A549 (cell line): ENCODE measurements at regions of chr3 and their contacts with region 1.

Region 1: DNA sequence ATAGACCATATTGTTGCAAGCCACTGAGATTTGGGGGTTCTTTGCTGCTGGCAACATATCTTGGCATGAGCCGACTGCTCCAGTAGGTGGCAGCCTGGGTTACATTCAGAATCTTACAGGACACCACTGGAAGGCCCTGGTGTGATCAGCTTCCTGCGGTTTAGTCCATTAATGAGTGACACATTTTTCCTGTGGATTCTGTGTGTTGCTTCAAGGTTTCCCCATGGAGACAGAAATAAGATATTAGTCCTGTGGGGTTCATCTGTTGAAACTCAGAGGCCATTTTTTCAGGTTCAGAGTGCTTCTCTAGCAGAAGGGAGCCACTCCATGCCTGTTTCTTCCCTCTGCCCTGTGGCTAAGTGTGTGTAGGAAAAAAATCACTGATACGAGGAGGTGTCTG is 116.2 kb downstream of the MFSD1 start:
- DNase-seq: peak; percentile 15 to 53
- ATAC-seq: peak; percentile 86 to 95
- H3K4me3 ChIP-seq: no peak overlapping the region
- H3K27ac ChIP-seq: no peak overlapping the region
- H3K4me1 ChIP-seq: no peaks in the 10 kb centered on the region
- CTCF ChIP-seq: peak; percentile 53
- EP300 ChIP-seq: no peak
- POLR2A ChIP-seq: no peak
- RAD21 ChIP-seq: peak; percentile 65 to 71

Region 2: DNA sequence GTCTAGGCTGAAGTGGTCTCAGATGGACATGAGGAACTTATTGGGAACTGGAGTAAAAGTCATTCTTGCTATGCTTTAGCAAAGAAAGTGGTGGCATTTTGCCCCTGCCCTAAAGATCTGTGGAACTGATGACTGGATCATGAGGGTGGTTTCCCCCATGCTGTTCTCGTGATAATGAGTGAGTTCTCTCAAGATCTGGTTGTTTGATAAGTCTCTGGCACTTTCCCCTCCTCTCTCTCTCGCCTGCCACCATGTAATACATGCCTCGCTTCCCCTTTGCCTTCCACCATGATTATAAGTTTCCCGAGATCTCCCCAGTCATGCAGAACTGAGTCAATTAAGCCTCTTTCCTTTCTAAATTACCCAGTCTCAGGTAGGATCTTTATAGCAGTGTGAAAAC is 358.5 kb before region 1 on chr3:
- CTCF ChIA-PET with region 1: no interaction called
- POLR2A ChIA-PET with region 1: no interaction called
- DNase-seq: no peak
- ATAC-seq: no peak
- H3K4me3 ChIP-seq: no peak overlapping the region
- H3K27ac ChIP-seq: no peak overlapping the region
- H3K4me1 ChIP-seq: no peaks in the 10 kb centered on the region
- CTCF ChIP-seq: no peak
- EP300 ChIP-seq: no peak
- POLR2A ChIP-seq: no peak
- RAD21 ChIP-seq: no peak

Region 3: DNA sequence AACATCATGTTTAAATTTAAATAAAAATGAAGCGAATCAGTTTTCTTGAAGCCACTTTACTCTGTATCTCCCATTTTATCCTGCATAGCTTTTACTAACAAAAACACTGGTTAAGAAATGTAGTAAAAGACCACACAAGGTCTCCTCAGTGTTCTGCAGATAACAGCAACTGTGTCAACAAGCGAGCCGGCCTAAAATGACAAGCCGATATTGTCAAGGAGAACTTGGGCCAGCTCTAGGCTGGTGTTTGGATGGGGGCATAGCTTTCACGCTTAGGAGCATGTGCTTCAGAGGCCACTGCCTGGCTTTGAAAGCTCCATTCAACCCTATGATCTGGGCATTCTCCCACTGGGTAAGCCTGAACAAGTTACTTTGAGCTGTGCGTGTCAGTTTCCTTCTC is 78.0 kb before region 1 on chr3:
- CTCF ChIA-PET with region 1: no interaction called
- POLR2A ChIA-PET with region 1: no interaction called
- DNase-seq: no peak
- ATAC-seq: no peak
- H3K4me3 ChIP-seq: no peak overlapping the region
- H3K27ac ChIP-seq: no peak overlapping the region
- H3K4me1 ChIP-seq: no peaks in the 10 kb centered on the region
- CTCF ChIP-seq: no peak
- EP300 ChIP-seq: no peak
- POLR2A ChIP-seq: no peak
- RAD21 ChIP-seq: no peak

Region 4: DNA sequence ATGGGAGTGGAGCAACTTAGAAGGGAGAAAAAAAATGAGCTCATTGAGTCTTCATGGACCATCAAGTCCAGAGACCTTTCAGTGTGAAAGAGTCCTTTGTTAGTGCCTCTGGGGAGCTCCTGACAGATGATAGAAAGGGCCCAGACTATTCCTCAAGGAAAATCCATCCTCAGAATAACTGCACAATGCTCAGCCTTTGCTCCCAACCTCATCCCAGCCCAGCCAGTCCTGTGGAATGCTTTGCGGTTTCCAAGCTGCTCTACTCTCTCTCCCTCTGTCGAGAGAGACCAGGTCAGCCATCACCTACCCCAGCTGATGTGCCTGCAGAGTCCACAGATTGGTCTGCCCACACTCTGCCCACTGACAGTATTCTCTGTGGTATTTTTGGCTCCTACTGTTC is 290.0 kb after region 1 on chr3:
- CTCF ChIA-PET with region 1: no interaction called
- POLR2A ChIA-PET with region 1: no interaction called
- DNase-seq: no peak
- ATAC-seq: no peak
- H3K4me3 ChIP-seq: no peak overlapping the region
- H3K27ac ChIP-seq: no peak overlapping the region
- H3K4me1 ChIP-seq: no peaks in the 10 kb centered on the region
- CTCF ChIP-seq: no peak
- EP300 ChIP-seq: no peak
- POLR2A ChIP-seq: no peak
- RAD21 ChIP-seq: no peak

Region 5: GRCh38 chr3:159252772-159253384 is 334.9 kb after region 1 on chr3:
- CTCF ChIA-PET with region 1: interaction called, 20 read pairs
- POLR2A ChIA-PET with region 1: no interaction called
- DNase-seq: peak; percentile 5 to 68
- ATAC-seq: no peak
- H3K4me3 ChIP-seq: no peak overlapping the region
- H3K27ac ChIP-seq: no peak overlapping the region
- H3K4me1 ChIP-seq: no peaks in the 10 kb centered on the region
- CTCF ChIP-seq: peak; percentile 62
- EP300 ChIP-seq: no peak
- POLR2A ChIP-seq: no peak
- RAD21 ChIP-seq: peak; percentile 65 to 84

Region 6: GRCh38 chr3:159486586-159486985 is 568.6 kb after region 1 on chr3:
- CTCF ChIA-PET with region 1: no interaction called
- POLR2A ChIA-PET with region 1: no interaction called
- DNase-seq: peak; percentile 2 to 39
- ATAC-seq: peak; percentile 43 to 74; a peak in 3 of 6 replicates
- H3K4me3 ChIP-seq: no peak overlapping the region
- H3K27ac ChIP-seq: no peak overlapping the region
- H3K4me1 ChIP-seq: no peaks in the 10 kb centered on the region
- CTCF ChIP-seq: no peak
- EP300 ChIP-seq: no peak
- POLR2A ChIP-seq: no peak
- RAD21 ChIP-seq: 0 out of 5 replicates have a peak, but pooled peaks of 1 of the 2 experiments have one; percentile 33